GM12878 (cell line): ENCODE measurements at regions of chr6 and their contacts with region 1.

Region 1: DNA sequence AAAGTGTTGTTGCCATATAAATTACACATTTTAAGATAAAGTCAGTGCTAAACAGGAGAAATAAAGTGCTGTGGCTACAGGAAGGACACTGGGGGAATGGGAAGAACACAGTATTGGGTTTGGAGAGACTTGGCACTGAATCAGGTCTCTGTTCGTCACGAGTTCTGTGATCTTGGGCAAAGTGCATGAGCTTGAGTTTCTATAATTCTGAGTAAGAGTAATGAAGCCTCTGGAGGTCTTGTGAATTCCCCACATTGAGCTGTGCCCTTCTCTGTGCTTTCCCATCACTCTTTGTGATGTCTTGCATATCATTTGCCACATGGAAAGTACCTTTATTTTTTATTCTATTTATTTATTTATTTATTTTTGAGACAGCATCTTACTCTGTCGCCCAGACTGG is 16.8 kb upstream of the EEF1A1 start:
- DNase-seq: no peak
- ATAC-seq: peak; percentile 93
- H3K4me3 ChIP-seq: no peak overlapping the region
- H3K27ac ChIP-seq: 0 out of 2 replicates have a peak overlapping the region, but pooled peaks have one; percentile 6
- H3K4me1 ChIP-seq: no peaks in the 10 kb centered on the region
- H3K27me3 ChIP-seq: no peaks in the 10 kb centered on the region
- CTCF ChIP-seq: no peak
- EP300 ChIP-seq: no peak
- POLR2A ChIP-seq: no peak
- RAD21 ChIP-seq: no peak

Region 2: GRCh38 chr6:73367761-73368355 is 169.8 kb before region 1 on chr6:
- CTCF ChIA-PET with region 1: no interaction called
- POLR2A ChIA-PET with region 1: no interaction called
- RAD21 ChIA-PET with region 1: no interaction called
- SMC1A ChIA-PET with region 1: no interaction called
- in situ Hi-C with region 1: no loop called
- intact Hi-C with region 1: no loop called
- DNase-seq: no peak
- ATAC-seq: no peak
- H3K4me3 ChIP-seq: no peak overlapping the region
- H3K27ac ChIP-seq: no peak overlapping the region
- H3K4me1 ChIP-seq: no peaks in the 10 kb centered on the region
- H3K27me3 ChIP-seq: 0 out of 4 replicates have a peak, but pooled peaks cover 0 to 3% of the 10 kb centered on the region in 2 experiments
- CTCF ChIP-seq: no peak
- EP300 ChIP-seq: no peak
- POLR2A ChIP-seq: no peak
- RAD21 ChIP-seq: no peak

Region 3: DNA sequence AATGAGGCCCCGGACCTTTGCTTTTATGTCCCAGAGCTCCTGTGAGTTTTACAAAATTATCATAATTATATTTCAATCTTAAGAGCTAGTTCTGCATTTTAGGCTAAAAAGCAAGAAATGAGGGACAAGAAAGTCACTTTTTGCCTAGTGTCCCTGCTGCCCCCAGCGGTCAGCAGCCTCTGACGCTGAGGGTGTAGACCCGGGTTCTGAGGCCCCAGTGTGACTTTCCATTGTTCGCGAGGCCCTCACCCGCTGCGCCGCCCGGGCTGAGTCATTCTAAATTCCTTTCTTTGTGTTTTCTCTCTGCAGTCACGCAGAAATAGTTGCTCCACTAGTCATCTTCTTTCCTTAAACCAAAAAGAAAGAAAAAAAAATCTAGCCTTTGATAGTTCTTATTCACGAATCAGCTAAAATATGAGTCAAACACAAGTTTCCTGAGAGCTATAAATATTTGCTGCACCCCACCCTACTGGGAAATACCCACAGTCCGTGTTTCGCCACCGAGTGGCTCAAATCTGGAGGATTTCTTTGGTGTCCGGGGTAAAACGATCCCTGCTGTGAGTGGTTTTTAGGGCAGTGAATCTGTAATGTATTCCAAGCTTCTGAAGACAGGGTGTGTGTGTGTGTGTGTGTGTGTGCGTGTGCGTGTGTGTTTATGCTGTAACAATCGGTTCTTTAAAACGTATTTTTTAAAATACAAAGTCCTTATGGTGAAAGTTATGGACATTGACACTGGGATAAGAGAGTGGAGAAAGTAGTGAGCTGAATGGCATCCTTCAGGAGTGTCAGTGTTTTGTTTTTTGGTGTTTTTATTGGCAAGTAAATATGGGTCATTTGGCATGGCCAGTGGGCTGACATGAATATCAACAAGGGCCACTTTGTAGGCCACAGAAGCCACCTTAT is 42.8 kb after region 1 on chr6:
- CTCF ChIA-PET with region 1: interaction called, 7 read pairs
- POLR2A ChIA-PET with region 1: interaction called, 5 read pairs
- RAD21 ChIA-PET with region 1: interaction called, 13 read pairs
- SMC1A ChIA-PET with region 1: interaction called, 12 read pairs
- in situ Hi-C with region 1: no loop called
- intact Hi-C with region 1: no loop called
- DNase-seq: peak; percentile 61
- ATAC-seq: peak; percentile 92
- H3K4me3 ChIP-seq: peak overlapping the region; percentile 34; the same call in 1 of the 2 replicates
- H3K27ac ChIP-seq: peak overlapping the region; percentile 96
- H3K4me1 ChIP-seq: peaks cover 20% of the 10 kb centered on the region
- H3K27me3 ChIP-seq: no peaks in the 10 kb centered on the region
- CTCF ChIP-seq: peak; percentile 42 to 53 (median 46); a peak in 5 of 6 replicates
- EP300 ChIP-seq: no peak
- POLR2A ChIP-seq: peak; percentile 71
- RAD21 ChIP-seq: 0 out of 2 replicates have a peak, but pooled peaks have one; percentile 36

Region 4: DNA sequence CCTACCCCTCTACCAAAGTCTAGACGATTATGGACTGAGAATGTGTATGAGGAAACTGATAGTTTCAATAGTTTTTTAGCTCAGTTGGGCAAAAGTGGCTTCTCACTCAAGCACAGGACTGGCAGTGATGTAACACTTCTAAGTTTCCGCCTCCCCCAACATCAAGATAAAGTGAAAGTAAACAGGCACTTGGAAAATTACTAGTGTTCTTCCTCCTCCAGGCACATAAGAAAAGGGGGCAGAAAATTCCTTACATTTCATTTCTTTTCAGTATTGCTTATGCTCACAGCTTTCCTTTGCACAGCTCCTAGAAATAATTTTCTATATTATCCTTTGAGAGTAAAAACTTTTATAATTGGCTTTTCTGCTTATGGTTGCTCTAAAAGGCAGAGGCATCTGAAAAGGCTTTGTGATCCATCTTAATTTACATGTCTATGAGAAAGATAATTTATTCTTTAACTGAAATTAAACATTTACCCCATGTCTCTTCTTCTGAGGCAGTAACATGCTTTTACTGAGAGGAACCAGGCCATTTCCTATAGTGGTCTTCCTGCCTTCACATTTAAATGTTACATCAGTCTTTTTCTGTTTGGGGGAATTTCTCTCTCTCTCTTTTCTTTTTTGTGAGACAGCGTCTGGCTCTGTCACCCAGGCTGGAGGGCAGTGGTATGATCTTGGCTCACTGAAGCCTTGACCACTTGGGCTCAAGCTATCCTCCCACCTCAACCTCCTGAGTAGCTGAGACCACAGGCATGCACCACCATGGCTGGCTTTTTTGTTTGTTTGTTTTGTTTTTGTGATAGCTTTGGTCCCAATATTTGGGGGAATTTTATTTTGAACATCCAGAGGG is 48.1 kb after region 1 on chr6:
- CTCF ChIA-PET with region 1: interaction called, 7 read pairs
- POLR2A ChIA-PET with region 1: interaction called, 4 read pairs
- RAD21 ChIA-PET with region 1: interaction called, 13 read pairs
- SMC1A ChIA-PET with region 1: interaction called, 12 read pairs
- in situ Hi-C with region 1: no loop called
- intact Hi-C with region 1: no loop called
- DNase-seq: peak; percentile 66
- ATAC-seq: peak; percentile 87
- H3K4me3 ChIP-seq: peak overlapping the region; percentile 29
- H3K27ac ChIP-seq: peak overlapping the region; percentile 95
- H3K4me1 ChIP-seq: peaks cover 18% of the 10 kb centered on the region
- H3K27me3 ChIP-seq: no peaks in the 10 kb centered on the region
- CTCF ChIP-seq: no peak
- EP300 ChIP-seq: peak in 1 of 2 experiments; percentile 39; a peak in 1 of 4 replicates
- POLR2A ChIP-seq: no peak
- RAD21 ChIP-seq: no peak